ENCODE measurements at regions of chr2 and their contacts with region 1.

Region 1: GRCh38 chr2:168434146-168434545 is 21.9 kb upstream of the CERS6 start:
- DNase-seq: no peak
- H3K4me3 Mint-ChIP-seq: no peak overlapping the region
- H3K27ac Mint-ChIP-seq: no peak overlapping the region
- H3K4me1 Mint-ChIP-seq: peaks cover 44% of the 10 kb centered on the region
- H3K27me3 Mint-ChIP-seq: peaks cover 2% of the 10 kb centered on the region

Region 2: GRCh38 chr2:168149150-168149974 is 284.8 kb before region 1 on chr2:
- intact Hi-C with region 1: no loop called
- DNase-seq: no peak
- H3K4me3 Mint-ChIP-seq: no peak overlapping the region
- H3K27ac Mint-ChIP-seq: no peak overlapping the region
- H3K4me1 Mint-ChIP-seq: peaks cover 10% of the 10 kb centered on the region
- H3K27me3 Mint-ChIP-seq: no peaks in the 10 kb centered on the region

Region 3: GRCh38 chr2:168184681-168185513 is 249.2 kb before region 1 on chr2:
- intact Hi-C with region 1: no loop called
- DNase-seq: no peak
- H3K4me3 Mint-ChIP-seq: no peak overlapping the region
- H3K27ac Mint-ChIP-seq: no peak overlapping the region
- H3K4me1 Mint-ChIP-seq: peaks cover 49% of the 10 kb centered on the region
- H3K27me3 Mint-ChIP-seq: no peaks in the 10 kb centered on the region

Region 4: GRCh38 chr2:168378960-168379669 is 55.0 kb before region 1 on chr2:
- intact Hi-C with region 1: loop called (anchors 2 kb)
- DNase-seq: no peak
- H3K4me3 Mint-ChIP-seq: no peak overlapping the region
- H3K27ac Mint-ChIP-seq: no peak overlapping the region
- H3K4me1 Mint-ChIP-seq: peaks cover 12% of the 10 kb centered on the region
- H3K27me3 Mint-ChIP-seq: peaks cover 6% of the 10 kb centered on the region

Region 5: GRCh38 chr2:168495524-168495923 is 61.4 kb after region 1 on chr2:
- intact Hi-C with region 1: loop called (anchors 1 kb)
- DNase-seq: no peak
- H3K4me3 Mint-ChIP-seq: no peak overlapping the region
- H3K27ac Mint-ChIP-seq: peak overlapping the region; percentile 65
- H3K4me1 Mint-ChIP-seq: peaks cover 62% of the 10 kb centered on the region
- H3K27me3 Mint-ChIP-seq: peaks cover 3% of the 10 kb centered on the region

Region 6: GRCh38 chr2:168583064-168583709 is 149.0 kb after region 1 on chr2:
- intact Hi-C with region 1: loop called (anchors 2 kb)
- DNase-seq: no peak
- H3K4me3 Mint-ChIP-seq: peak overlapping the region; percentile 34
- H3K27ac Mint-ChIP-seq: peak overlapping the region; percentile 25
- H3K4me1 Mint-ChIP-seq: peaks cover 46% of the 10 kb centered on the region
- H3K27me3 Mint-ChIP-seq: no peaks in the 10 kb centered on the region

Region 7: GRCh38 chr2:168751104-168751740 is 317.1 kb after region 1 on chr2:
- intact Hi-C with region 1: loop called (anchors 1 kb)
- DNase-seq: peak; percentile 12
- H3K4me3 Mint-ChIP-seq: peak overlapping the region; percentile 24
- H3K27ac Mint-ChIP-seq: peak overlapping the region; percentile 42
- H3K4me1 Mint-ChIP-seq: peaks cover 50% of the 10 kb centered on the region
- H3K27me3 Mint-ChIP-seq: no peaks in the 10 kb centered on the region

Measured in activated T-helper 1 cell treated with anti-CD3 and anti-CD28 coated beads, Interleukin-12 subunit alpha, Interleukin-12 subunit beta, Interleukin-2, Interleukin-4 antibody, amounts not matched to agents 30 ng/mL and 10 ng/mL and 1 ng/mL, durations not matched to agents 14 hours and 24 hours and 36 hours (primary cell).